ENCODE measurements at regions of chr13 and their contacts with region 1.

Region 1: GRCh38 chr13:36420437-36420891 is 11.8 kb upstream of the CCNA1 start:
- DNase-seq: peak; percentile 70
- H3K4me3 Mint-ChIP-seq: peak overlapping the region; percentile 13
- H3K27ac Mint-ChIP-seq: peak overlapping the region; percentile 59
- H3K4me1 Mint-ChIP-seq: peaks cover 51% of the 10 kb centered on the region
- H3K27me3 Mint-ChIP-seq: peaks cover 10% of the 10 kb centered on the region

Region 2: GRCh38 chr13:36346222-36347083 is 74.0 kb before region 1 on chr13 and contains the start of gene SPART:
- intact Hi-C with region 1: loop called (anchors 1 kb)
- DNase-seq: peak; percentile 82
- H3K4me3 Mint-ChIP-seq: peak within 1 kb of the TSS; percentile 88
- H3K27ac Mint-ChIP-seq: peak within 1 kb of the TSS; percentile 92
- H3K4me1 Mint-ChIP-seq: peaks cover 10% of the 10 kb centered on the region
- H3K27me3 Mint-ChIP-seq: peaks cover 2% of the 10 kb centered on the region
- total RNA-seq, gene SPART: 31.7 and 32.0 TPM in 2 replicates

Region 3: GRCh38 chr13:36453516-36453915 is 33.1 kb after region 1 on chr13:
- intact Hi-C with region 1: loop called (anchors 2 kb)
- DNase-seq: no peak
- H3K4me3 Mint-ChIP-seq: no peak overlapping the region
- H3K27ac Mint-ChIP-seq: no peak overlapping the region
- H3K4me1 Mint-ChIP-seq: peaks cover 14% of the 10 kb centered on the region
- H3K27me3 Mint-ChIP-seq: peaks cover 14% of the 10 kb centered on the region

Region 4: DNA sequence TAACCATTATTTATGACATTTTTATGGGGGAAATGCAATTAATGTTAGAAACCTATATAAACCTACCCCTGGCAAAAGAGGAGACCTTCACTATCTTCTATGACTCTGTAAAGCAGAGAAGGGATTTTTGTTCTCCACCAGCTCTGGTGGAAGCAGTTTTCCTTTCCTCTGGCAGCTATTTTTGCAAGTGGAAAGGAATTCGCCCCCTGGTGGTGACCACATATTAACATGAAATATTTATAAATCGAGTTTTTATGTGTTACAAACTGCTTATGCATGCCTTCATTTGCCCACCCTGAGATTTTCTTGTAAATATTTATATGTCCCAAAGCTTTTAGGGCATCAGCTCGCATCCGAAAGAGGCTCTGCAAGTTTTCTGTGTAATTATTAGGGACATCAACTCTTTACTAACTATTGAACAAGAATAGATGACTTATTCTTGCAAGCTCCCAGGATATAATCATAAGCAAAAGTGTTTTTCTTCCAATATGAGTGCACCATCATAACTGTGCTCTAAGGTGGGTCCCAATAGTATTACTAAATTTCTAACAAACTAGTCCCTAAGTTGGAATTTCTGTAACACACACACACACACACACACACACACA is 315.8 kb after region 1 on chr13:
- intact Hi-C with region 1: loop called (anchors 1 kb)
- DNase-seq: no peak
- H3K4me3 Mint-ChIP-seq: no peak overlapping the region
- H3K27ac Mint-ChIP-seq: no peak overlapping the region
- H3K4me1 Mint-ChIP-seq: no peaks in the 10 kb centered on the region
- H3K27me3 Mint-ChIP-seq: peaks cover 2% of the 10 kb centered on the region

Region 5: DNA sequence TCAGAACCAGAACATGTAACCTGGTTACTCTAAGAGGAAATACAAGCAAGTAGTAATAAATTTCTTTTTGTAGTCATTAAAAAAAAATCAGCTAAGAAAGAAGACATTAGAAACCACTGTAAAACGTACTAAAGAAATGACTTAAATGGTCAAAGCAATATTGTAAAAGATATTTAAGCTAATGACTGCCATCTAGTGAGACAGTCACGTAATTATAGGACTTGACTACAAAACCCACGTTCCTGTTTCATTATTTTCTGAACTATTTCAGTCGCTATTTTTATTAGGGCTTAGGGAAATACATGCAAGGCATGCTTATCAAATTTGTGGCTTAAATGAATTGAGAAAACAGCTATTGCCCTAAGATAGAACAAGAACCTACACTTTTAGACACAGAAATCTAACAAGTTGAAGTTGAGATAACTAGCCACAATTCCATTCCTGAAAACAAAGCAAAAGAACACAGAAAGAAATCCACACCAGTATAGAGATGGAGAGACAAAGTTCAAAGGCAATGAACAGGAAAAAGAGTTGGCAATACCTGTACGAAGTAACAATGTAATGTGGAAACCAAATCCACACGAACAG is 560.8 kb after region 1 on chr13:
- intact Hi-C with region 1: loop called (anchors 5 kb)
- DNase-seq: no peak
- H3K4me3 Mint-ChIP-seq: no peak overlapping the region
- H3K27ac Mint-ChIP-seq: peak overlapping the region; percentile 15
- H3K4me1 Mint-ChIP-seq: peaks cover 3% of the 10 kb centered on the region
- H3K27me3 Mint-ChIP-seq: no peaks in the 10 kb centered on the region